ENCODE measurements at regions of chr1 and their contacts with region 1.

Region 1: DNA sequence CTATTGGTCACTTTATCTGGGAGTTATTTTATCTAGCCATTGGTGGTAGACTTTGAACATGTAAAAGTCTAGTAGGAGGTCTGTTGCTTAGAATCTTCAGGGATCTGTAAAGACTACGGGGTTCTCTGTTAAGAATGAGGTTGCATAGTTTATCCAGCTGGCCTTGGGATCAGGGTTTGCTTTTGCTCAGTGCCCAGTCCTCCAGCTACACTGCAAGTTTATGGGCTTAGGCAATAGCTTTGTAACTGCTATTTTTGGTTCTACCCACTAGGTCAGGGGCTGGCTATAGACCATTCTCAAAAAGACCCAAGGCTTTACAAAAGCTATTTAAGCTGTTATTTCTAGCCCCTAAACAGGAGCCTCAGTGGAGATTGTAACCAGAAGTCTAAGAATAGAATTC is 9.8 kb downstream of the SH3GLB1 start:
- DNase-seq: no peak
- ATAC-seq: peak; percentile 37
- H3K4me3 ChIP-seq: no peak overlapping the region
- H3K27ac ChIP-seq: no peak overlapping the region
- H3K4me1 ChIP-seq: peaks cover 6% of the 10 kb centered on the region; the same call in 1 of the 2 replicates
- H3K27me3 ChIP-seq: no peaks in the 10 kb centered on the region
- CTCF ChIP-seq: no peak
- EP300 ChIP-seq: no peak
- POLR2A ChIP-seq: no peak
- RAD21 ChIP-seq: no peak

Region 2: GRCh38 chr1:86733340-86733739 is 19.2 kb after region 1 on chr1:
- CTCF ChIA-PET with region 1: interaction called, 10 read pairs
- POLR2A ChIA-PET with region 1: interaction called, 3 read pairs
- RAD21 ChIA-PET with region 1: interaction called, 3 read pairs
- SMC1A ChIA-PET with region 1: interaction called, 23 read pairs
- in situ Hi-C with region 1: no loop called
- intact Hi-C with region 1: no loop called
- DNase-seq: no peak
- ATAC-seq: no peak
- H3K4me3 ChIP-seq: no peak overlapping the region
- H3K27ac ChIP-seq: no peak overlapping the region
- H3K4me1 ChIP-seq: no peaks in the 10 kb centered on the region
- H3K27me3 ChIP-seq: no peaks in the 10 kb centered on the region
- CTCF ChIP-seq: no peak
- EP300 ChIP-seq: no peak
- POLR2A ChIP-seq: no peak
- RAD21 ChIP-seq: no peak

Region 3: GRCh38 chr1:87266284-87266683 is 552.1 kb after region 1 on chr1:
- CTCF ChIA-PET with region 1: no interaction called
- POLR2A ChIA-PET with region 1: no interaction called
- RAD21 ChIA-PET with region 1: no interaction called
- SMC1A ChIA-PET with region 1: no interaction called
- in situ Hi-C with region 1: no loop called
- intact Hi-C with region 1: no loop called
- DNase-seq: no peak
- ATAC-seq: no peak
- H3K4me3 ChIP-seq: no peak overlapping the region
- H3K27ac ChIP-seq: no peak overlapping the region
- H3K4me1 ChIP-seq: no peaks in the 10 kb centered on the region
- H3K27me3 ChIP-seq: peaks cover 2% of the 10 kb centered on the region in 2 experiments; a peak in 1 of 4 replicates
- CTCF ChIP-seq: no peak
- EP300 ChIP-seq: no peak
- POLR2A ChIP-seq: no peak
- RAD21 ChIP-seq: no peak

Measured in GM12878 (cell line).